PC-9 (cell line): ENCODE measurements at regions of chr1 and their contacts with region 1.

Region 1: DNA sequence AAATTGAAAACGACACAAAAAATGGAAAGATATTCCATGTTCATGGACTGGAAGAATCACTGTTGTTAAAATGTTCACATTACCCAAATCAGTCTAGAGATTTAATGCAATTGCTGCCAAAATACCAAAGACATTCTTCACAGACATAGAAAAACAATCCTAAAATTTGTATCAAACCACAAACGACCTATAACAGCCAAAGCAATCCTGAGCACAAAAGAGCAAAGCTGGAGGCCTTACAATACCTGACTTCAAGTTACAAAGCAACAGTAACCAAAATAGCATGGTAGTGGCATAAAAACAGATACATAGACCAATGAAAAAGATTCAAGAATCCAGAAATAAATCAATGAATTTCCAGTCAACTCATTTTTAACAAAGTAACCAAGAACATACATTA is 1077.3 kb downstream of the KCNT2 start:
- DNase-seq: no peak
- H3K4me3 ChIP-seq: no peak overlapping the region
- H3K27ac ChIP-seq: no peak overlapping the region
- H3K4me1 ChIP-seq: no peaks in the 10 kb centered on the region
- H3K27me3 ChIP-seq: no peaks in the 10 kb centered on the region
- CTCF ChIP-seq: no peak

Region 2: GRCh38 chr1:194394676-194395075 is 1136.3 kb before region 1 on chr1:
- CTCF ChIA-PET with region 1: no interaction called
- POLR2A ChIA-PET with region 1: no interaction called
- intact Hi-C with region 1: loop called (anchors 5 kb)
- DNase-seq: no peak
- H3K4me3 ChIP-seq: no peak overlapping the region
- H3K27ac ChIP-seq: no peak overlapping the region
- H3K4me1 ChIP-seq: no peaks in the 10 kb centered on the region
- H3K27me3 ChIP-seq: no peaks in the 10 kb centered on the region
- CTCF ChIP-seq: no peak